A673 (cell line): ENCODE measurements at regions of chr9 and their contacts with region 1.

Region 1: GRCh38 chr9:113401027-113401792 is at the start of gene ALAD:
- DNase-seq: peak; percentile 99
- H3K4me3 ChIP-seq: peak within 1 kb of the TSS; percentile 95
- H3K27ac ChIP-seq: peak within 1 kb of the TSS; percentile 57
- H3K4me1 ChIP-seq: peaks cover 4% of the 10 kb centered on the region
- H3K27me3 ChIP-seq: no peaks in the 10 kb centered on the region
- CTCF ChIP-seq: peak; percentile 99
- total RNA-seq, gene ALAD: 18.9 and 20.9 TPM in 2 replicates

Region 2: DNA sequence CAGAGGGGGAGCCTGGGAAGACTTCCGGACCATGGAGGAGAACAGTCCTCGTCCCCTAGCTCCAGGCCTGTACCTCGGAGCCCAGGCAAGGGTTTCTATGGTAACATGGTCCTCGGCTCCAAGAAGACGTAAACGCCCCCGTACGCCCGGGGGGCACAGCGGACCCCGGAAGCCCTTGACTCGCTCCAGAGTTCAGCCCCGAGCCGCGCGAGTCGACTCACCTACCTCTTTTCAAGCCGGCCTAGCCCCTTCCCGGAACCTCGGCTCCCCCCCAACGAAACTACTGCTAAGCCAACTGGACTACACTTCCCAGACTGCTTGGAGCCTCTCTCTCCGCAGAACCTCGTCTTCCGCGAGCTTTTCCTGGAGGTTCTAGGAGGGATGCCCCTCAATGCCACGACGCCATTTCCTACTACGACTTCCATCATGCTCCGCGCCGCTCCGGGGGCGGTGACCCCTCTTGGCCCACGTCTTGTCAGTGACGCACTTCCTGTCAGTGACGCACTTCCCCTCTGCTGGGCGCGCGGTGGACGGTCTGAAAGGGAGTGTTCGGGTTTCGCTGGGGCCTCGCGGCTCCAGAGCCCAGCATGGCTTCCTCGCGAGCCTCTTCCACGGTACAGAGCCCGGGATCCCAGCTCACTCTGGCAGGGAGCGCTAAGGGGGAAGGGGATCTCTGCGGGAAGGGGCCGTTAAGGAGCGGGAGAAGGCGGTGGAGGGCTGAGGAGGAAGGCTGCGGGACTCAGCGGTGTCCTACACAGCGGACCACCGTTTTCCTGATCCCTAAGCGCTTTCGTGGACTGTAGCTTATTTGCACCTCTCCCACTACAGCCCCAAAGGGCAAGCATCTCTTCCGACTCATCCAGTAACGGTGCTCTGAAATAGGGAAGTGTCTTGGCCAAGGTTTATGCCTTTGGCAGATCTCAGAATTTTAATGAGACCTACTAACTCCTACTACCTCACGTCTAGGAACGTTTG is 125.8 kb before region 1 on chr9 and contains the starts of genes CDC26 and PRPF4:
- CTCF ChIA-PET with region 1: interaction called, 3 read pairs
- POLR2A ChIA-PET with region 1: no interaction called
- intact Hi-C with region 1: loop called (anchors 10 kb)
- DNase-seq: peak; percentile 99
- H3K4me3 ChIP-seq: peak within 1 kb of the TSS; percentile 75
- H3K27ac ChIP-seq: peak within 1 kb of the TSS; percentile 95
- H3K4me1 ChIP-seq: peaks cover 16% of the 10 kb centered on the region
- H3K27me3 ChIP-seq: no peaks in the 10 kb centered on the region
- CTCF ChIP-seq: no peak
- total RNA-seq, gene CDC26: 17.9 and 25.4 TPM in 2 replicates
- total RNA-seq, gene PRPF4: 54.4 and 59.8 TPM in 2 replicates

Region 3: GRCh38 chr9:113309204-113309813 is 91.9 kb before region 1 on chr9:
- CTCF ChIA-PET with region 1: interaction called, 5 read pairs
- POLR2A ChIA-PET with region 1: no interaction called
- intact Hi-C with region 1: loop called (anchors 10 kb)
- DNase-seq: peak; percentile 58
- H3K4me3 ChIP-seq: no peak overlapping the region
- H3K27ac ChIP-seq: no peak overlapping the region
- H3K4me1 ChIP-seq: no peaks in the 10 kb centered on the region
- H3K27me3 ChIP-seq: no peaks in the 10 kb centered on the region
- CTCF ChIP-seq: peak; percentile 78

Region 4: DNA sequence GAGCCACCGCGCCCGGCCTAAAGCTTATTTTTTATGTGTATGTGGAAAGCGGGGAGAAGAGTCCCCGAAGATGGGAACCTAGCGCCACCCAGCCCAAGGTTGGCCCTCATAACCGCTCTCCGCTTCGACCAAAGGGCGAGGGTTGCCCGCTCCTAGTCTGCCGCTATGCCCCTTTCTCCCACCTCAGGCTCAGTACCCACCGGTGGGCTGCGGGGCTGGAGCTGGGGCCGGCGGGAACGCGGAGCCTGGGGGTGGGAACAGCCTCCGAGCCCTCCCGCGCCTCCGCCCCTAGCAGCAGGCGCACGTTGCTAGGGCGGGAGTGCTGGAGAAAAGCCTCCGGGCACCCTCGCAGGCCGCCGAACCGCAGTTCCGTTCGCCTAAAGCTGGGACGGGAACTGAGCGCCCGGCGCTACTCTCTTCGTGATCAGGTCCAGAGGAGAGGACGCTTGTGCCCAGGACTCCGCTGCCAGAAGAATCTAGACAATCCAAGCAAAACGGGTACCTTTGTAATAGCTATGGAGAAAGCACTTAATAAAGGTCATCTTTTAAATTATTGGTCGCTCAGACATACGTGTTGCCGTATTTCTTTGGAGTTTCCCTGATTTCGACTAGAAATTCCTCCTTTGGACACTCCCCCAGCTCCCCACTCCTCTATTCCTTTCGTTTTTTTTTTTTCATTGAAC is 61.1 kb before region 1 on chr9 and contains the start of gene WDR31:
- CTCF ChIA-PET with region 1: no interaction called
- POLR2A ChIA-PET with region 1: interaction called, 11 read pairs
- intact Hi-C with region 1: no loop called
- DNase-seq: peak; percentile 92
- H3K4me3 ChIP-seq: peak within 1 kb of the TSS; percentile 66
- H3K27ac ChIP-seq: peak within 1 kb of the TSS; percentile 66
- H3K4me1 ChIP-seq: peaks cover 13% of the 10 kb centered on the region
- H3K27me3 ChIP-seq: no peaks in the 10 kb centered on the region
- CTCF ChIP-seq: no peak
- total RNA-seq, gene WDR31: 1.3 and 2.4 TPM in 2 replicates

Region 5: GRCh38 chr9:113657703-113658544 is 256.7 kb after region 1 on chr9:
- CTCF ChIA-PET with region 1: interaction called, 6 read pairs
- POLR2A ChIA-PET with region 1: no interaction called
- intact Hi-C with region 1: loop called (anchors 2 kb)
- DNase-seq: peak; percentile 81
- H3K4me3 ChIP-seq: no peak overlapping the region
- H3K27ac ChIP-seq: no peak overlapping the region
- H3K4me1 ChIP-seq: peaks cover 4% of the 10 kb centered on the region
- H3K27me3 ChIP-seq: peaks cover 5% of the 10 kb centered on the region
- CTCF ChIP-seq: peak; percentile 93

Region 6: DNA sequence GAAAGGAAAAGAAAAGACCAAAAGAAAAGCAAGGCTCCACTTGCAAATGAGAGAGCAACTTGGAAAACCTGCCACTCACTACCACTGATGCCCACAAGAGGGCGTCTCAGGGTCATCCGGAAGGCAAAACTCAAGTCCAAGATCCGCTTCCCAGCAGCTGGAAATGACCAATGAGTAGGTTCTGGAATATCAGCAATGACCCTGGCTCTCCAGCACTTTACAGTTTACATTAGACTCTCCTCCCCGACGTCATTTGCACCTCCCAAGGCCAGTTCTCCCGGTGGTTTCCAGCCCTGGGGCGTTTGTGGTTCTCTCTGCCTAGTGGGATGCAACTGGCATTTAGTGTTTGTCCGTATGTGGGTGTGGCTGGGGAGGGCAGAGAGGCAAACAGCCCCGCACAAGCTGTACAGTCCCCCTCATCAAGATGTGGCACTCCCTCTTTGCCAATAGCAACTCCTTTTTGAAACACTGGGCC is 281.1 kb after region 1 on chr9:
- CTCF ChIA-PET with region 1: interaction called, 10 read pairs
- POLR2A ChIA-PET with region 1: no interaction called
- intact Hi-C with region 1: no loop called
- DNase-seq: peak; percentile 61
- H3K4me3 ChIP-seq: no peak overlapping the region
- H3K27ac ChIP-seq: no peak overlapping the region
- H3K4me1 ChIP-seq: no peaks in the 10 kb centered on the region
- H3K27me3 ChIP-seq: peaks cover 22% of the 10 kb centered on the region
- CTCF ChIP-seq: peak; percentile 95